PC-3 (cell line): ENCODE measurements at regions of chr5 and their contacts with region 1.

Region 1: DNA sequence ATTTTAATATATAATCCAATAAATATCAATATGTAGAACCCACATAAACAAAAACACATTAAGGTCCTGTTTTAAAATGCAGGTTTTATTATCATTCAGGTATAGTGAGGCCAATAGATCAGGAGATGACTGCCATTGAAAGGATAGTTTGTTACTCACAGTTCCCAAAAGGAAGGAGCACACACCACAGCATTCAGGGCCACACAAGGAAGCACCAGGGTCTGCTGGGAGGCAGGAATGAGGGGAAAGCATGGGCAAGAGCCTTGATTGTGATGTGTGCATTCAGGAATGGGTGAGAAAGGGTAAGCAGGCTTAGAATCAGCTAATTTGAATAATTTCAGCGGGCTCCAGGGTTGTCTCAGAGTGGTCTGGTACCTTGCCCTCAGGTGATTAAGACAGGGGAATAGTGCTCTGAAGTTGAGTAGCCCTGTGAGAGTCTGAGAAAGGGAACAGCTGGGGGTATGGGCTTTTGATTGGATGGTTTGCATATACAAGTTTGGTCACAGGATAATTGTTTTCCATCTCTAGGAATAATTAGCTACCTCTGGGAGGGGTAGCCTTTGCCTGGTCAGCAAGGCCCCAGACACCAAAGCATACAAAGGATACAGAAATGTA is 19.8 kb upstream of the OTULIN start:
- DNase-seq: no peak
- ATAC-seq: no peak
- H3K4me3 ChIP-seq: no peak overlapping the region
- H3K27ac ChIP-seq: no peak overlapping the region
- H3K4me1 ChIP-seq: no peaks in the 10 kb centered on the region
- H3K27me3 ChIP-seq: no peaks in the 10 kb centered on the region
- CTCF ChIP-seq: no peak

Region 2: GRCh38 chr5:14351845-14352712 is 292.7 kb before region 1 on chr5:
- CTCF ChIA-PET with region 1: interaction called, 14 read pairs
- POLR2A ChIA-PET with region 1: no interaction called
- intact Hi-C with region 1: no loop called
- DNase-seq: peak; percentile 80
- ATAC-seq: peak; percentile 96
- H3K4me3 ChIP-seq: no peak overlapping the region
- H3K27ac ChIP-seq: no peak overlapping the region
- H3K4me1 ChIP-seq: no peaks in the 10 kb centered on the region
- H3K27me3 ChIP-seq: no peaks in the 10 kb centered on the region
- CTCF ChIP-seq: peak; percentile 98

Region 3: GRCh38 chr5:14364576-14365472 is 279.9 kb before region 1 on chr5:
- CTCF ChIA-PET with region 1: interaction called, 7 read pairs
- POLR2A ChIA-PET with region 1: no interaction called
- intact Hi-C with region 1: loop called (anchors 1 kb)
- DNase-seq: peak; percentile 64
- ATAC-seq: peak; percentile 39; the same call in 1 of the 2 replicates
- H3K4me3 ChIP-seq: no peak overlapping the region
- H3K27ac ChIP-seq: no peak overlapping the region
- H3K4me1 ChIP-seq: peaks cover 20% of the 10 kb centered on the region
- H3K27me3 ChIP-seq: no peaks in the 10 kb centered on the region
- CTCF ChIP-seq: peak; percentile 91

Region 4: DNA sequence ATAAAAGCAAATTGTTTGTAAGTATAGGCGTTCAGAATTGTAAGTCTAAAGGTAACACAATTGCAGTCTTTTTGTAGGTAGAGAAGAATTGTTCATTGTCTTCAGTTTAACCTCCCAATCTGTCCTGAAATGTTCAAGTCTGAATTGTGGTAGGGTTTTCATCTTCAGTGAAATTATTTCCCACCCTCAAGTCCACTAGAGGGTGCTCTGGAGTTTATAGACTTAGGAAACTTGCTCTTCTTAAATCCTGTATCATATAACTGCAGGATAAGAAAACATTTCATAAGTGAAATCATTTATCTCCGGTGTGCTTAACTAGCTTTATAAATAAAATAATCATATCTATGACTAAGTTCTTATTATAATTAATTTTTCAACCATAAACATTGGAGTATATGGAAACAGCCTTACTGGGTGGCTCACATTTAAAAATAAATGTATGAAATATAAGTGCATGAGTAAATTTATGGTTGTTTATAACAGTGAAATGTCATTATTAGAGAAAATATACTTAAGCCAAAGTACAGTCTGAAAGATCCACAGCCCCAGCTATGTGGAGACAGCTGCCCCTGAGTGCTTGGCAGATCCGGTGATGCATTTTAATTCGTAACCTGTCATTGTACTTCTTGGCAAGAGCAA is 245.6 kb before region 1 on chr5:
- CTCF ChIA-PET with region 1: interaction called, 6 read pairs
- POLR2A ChIA-PET with region 1: no interaction called
- intact Hi-C with region 1: loop called (anchors 1 kb)
- DNase-seq: peak; percentile 84
- ATAC-seq: peak; percentile 59
- H3K4me3 ChIP-seq: no peak overlapping the region
- H3K27ac ChIP-seq: peak overlapping the region; percentile 22
- H3K4me1 ChIP-seq: peaks cover 33% of the 10 kb centered on the region
- H3K27me3 ChIP-seq: no peaks in the 10 kb centered on the region
- CTCF ChIP-seq: peak; percentile 91

Region 5: DNA sequence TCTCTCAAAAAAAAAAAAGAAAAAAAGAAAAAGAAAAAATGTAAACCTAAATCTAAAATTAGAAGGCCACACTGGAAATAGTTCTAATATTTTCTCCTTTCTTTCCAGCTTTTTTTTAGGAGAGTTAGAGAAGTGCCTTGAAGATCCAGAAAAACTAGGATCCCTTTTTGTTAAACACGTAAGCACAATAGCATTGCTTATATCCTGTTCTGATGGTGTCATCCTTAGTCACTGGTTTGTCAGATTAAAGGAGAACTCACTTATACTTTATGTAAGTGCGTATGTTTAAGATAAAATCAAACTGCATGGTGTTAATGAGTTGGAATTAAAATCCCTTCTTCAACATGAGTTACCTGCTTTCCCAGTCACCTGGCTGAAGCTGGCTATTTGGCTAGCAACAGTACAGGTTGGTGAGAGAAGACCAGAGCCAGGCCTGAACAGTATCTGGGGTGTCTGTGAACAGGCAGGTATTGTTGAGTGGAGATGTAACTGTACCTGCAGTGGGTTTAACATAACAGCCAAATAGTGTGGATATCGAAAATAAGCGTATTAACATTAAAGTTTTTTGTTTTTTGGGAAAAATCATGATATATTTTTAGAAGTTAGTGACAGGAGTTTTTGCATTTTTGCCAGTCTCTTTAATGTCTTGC is 167.8 kb before region 1 on chr5:
- CTCF ChIA-PET with region 1: interaction called, 5 read pairs
- POLR2A ChIA-PET with region 1: no interaction called
- intact Hi-C with region 1: loop called (anchors 10 kb)
- DNase-seq: peak; percentile 92
- ATAC-seq: peak; percentile 92
- H3K4me3 ChIP-seq: peak overlapping the region; percentile 19; the same call in 1 of the 2 replicates
- H3K27ac ChIP-seq: peak overlapping the region; percentile 87
- H3K4me1 ChIP-seq: peaks cover 37% of the 10 kb centered on the region
- H3K27me3 ChIP-seq: no peaks in the 10 kb centered on the region
- CTCF ChIP-seq: no peak

Region 6: DNA sequence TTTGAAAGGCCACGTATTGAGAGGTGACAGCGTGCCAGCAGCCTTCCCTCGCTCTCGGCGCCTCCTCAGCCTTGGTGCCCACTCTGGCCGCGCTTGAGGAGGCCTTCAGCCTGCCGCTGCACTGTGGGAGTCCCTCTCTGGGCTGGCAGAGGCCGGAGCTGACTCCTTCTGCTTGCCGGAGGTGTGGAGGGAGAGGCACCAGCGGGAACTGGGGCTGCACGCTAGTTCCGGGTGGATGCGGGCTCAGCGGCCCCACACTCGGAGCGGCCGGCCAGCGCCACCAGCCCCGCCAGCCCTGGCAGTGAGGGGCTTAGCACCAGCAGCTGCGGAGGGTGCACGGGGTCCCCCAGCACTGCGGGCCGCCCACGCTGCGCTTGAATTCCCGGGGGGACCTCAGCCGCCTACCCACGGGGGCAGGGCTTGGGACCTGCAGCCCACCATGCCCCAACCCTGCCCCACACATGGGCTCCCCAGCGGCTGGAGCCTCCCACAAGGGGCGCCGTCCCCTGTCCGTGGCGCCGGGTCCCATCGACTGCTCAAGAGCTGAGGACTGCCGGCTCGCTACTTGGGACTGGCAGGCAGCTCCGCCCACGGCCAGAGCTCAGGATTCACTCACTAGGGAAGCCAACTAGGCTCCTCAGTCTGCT is 67.5 kb before region 1 on chr5:
- CTCF ChIA-PET with region 1: no interaction called
- POLR2A ChIA-PET with region 1: no interaction called
- intact Hi-C with region 1: no loop called
- DNase-seq: no peak
- ATAC-seq: no peak
- H3K4me3 ChIP-seq: no peak overlapping the region
- H3K27ac ChIP-seq: no peak overlapping the region
- H3K4me1 ChIP-seq: peaks cover 34% of the 10 kb centered on the region
- H3K27me3 ChIP-seq: no peaks in the 10 kb centered on the region
- CTCF ChIP-seq: no peak

Region 7: GRCh38 chr5:14607104-14607503 is 37.6 kb before region 1 on chr5:
- CTCF ChIA-PET with region 1: no interaction called
- POLR2A ChIA-PET with region 1: no interaction called
- intact Hi-C with region 1: loop called (anchors 2 kb)
- DNase-seq: no peak
- ATAC-seq: no peak
- H3K4me3 ChIP-seq: no peak overlapping the region
- H3K27ac ChIP-seq: no peak overlapping the region
- H3K4me1 ChIP-seq: no peaks in the 10 kb centered on the region
- H3K27me3 ChIP-seq: no peaks in the 10 kb centered on the region
- CTCF ChIP-seq: no peak

Region 8: GRCh38 chr5:15249152-15249551 is 604.4 kb after region 1 on chr5:
- CTCF ChIA-PET with region 1: no interaction called
- POLR2A ChIA-PET with region 1: no interaction called
- intact Hi-C with region 1: no loop called
- DNase-seq: peak; percentile 69
- ATAC-seq: no peak
- H3K4me3 ChIP-seq: no peak overlapping the region
- H3K27ac ChIP-seq: no peak overlapping the region
- H3K4me1 ChIP-seq: peaks cover 5% of the 10 kb centered on the region; the same call in 1 of the 2 replicates
- H3K27me3 ChIP-seq: no peaks in the 10 kb centered on the region
- CTCF ChIP-seq: no peak